HCT116 (cell line): ENCODE measurements at regions of chr5 and their contacts with region 1.

Region 1: GRCh38 chr5:92979716-92980115 is 601.3 kb downstream of the NR2F1-AS1 start:
- DNase-seq: no peak
- ATAC-seq: no peak
- H3K4me3 ChIP-seq: no peak overlapping the region
- H3K27ac ChIP-seq: no peak overlapping the region
- H3K4me1 ChIP-seq: no peaks in the 10 kb centered on the region
- H3K27me3 ChIP-seq: no peaks in the 10 kb centered on the region
- CTCF ChIP-seq: no peak
- POLR2A ChIP-seq: no peak
- RAD21 ChIP-seq: no peak

Region 2: GRCh38 chr5:92492908-92493307 is 486.8 kb before region 1 on chr5:
- CTCF ChIA-PET with region 1: no interaction called
- POLR2A ChIA-PET with region 1: no interaction called
- RAD21 ChIA-PET with region 1: no interaction called
- intact Hi-C with region 1: loop called (anchors 10 kb)
- DNase-seq: no peak
- ATAC-seq: no peak
- H3K4me3 ChIP-seq: no peak overlapping the region
- H3K27ac ChIP-seq: no peak overlapping the region
- H3K4me1 ChIP-seq: no peaks in the 10 kb centered on the region
- H3K27me3 ChIP-seq: no peaks in the 10 kb centered on the region
- CTCF ChIP-seq: no peak
- POLR2A ChIP-seq: no peak
- RAD21 ChIP-seq: no peak

Region 3: DNA sequence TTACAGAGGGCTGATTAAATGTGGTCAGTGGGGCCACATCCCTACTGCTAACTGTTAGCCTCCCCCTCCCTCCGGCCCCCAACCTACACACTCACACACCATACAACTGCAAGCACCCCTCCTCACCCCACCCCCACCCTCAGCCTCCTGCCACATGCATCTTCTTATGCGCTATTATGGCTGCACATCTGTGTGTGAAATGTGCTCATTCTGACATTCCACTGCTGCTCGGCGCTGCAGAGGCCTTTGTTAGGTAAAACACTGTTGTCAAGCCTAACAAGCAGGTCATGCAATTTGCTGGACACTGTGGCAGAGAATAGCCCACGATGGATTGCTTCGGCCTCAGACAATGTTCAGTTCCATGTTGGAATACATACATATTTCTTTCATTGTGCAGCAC is 427.7 kb after region 1 on chr5:
- CTCF ChIA-PET with region 1: no interaction called
- POLR2A ChIA-PET with region 1: no interaction called
- RAD21 ChIA-PET with region 1: no interaction called
- intact Hi-C with region 1: no loop called
- DNase-seq: no peak
- ATAC-seq: no peak
- H3K4me3 ChIP-seq: no peak overlapping the region
- H3K27ac ChIP-seq: no peak overlapping the region
- H3K4me1 ChIP-seq: no peaks in the 10 kb centered on the region; a peak in 1 of 4 replicates
- H3K27me3 ChIP-seq: no peaks in the 10 kb centered on the region
- CTCF ChIP-seq: no peak
- POLR2A ChIP-seq: no peak
- RAD21 ChIP-seq: no peak